Prostate gland (tissue), 2 donors: ENCODE measurements at regions of chr15 and their contacts with region 1.

Region 1: GRCh38 chr15:65184868-65185738 is at the start of gene CLPX:
- DNase-seq: peak; percentile 87
- H3K4me3 ChIP-seq: peak within 1 kb of the TSS; percentile 89 to 92
- H3K27ac ChIP-seq: peak within 1 kb of the TSS; percentile 94 to 97
- H3K4me1 ChIP-seq: no peaks in the 10 kb centered on the region
- H3K27me3 ChIP-seq: no peaks in the 10 kb centered on the region
- CTCF ChIP-seq: no peak
- POLR2A ChIP-seq: peak; percentile 66
- total RNA-seq, gene CLPX: 36.2 to 41.2 TPM

Region 2: DNA sequence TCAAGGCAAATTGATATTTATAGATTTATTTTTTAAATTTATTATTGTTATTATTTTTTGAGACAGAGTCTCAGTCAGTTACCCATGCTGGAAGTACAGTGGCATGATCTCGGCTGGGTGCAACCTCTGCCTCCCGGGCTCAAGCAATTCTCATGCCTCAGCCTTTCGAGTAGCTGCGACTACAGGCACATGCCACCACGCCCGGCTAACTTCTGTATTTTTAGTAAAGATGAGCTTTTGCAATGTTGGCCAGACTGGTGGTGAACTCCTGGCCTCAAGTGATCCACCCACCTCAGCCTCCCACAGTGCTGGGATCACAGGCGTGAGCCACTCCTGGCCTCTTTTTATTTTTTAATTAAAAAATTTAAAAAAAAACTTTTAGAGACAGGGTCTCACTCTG is 214.4 kb before region 1 on chr15:
- intact Hi-C with region 1: no loop called
- DNase-seq: no peak
- H3K4me3 ChIP-seq: no peak overlapping the region
- H3K27ac ChIP-seq: no peak overlapping the region
- H3K4me1 ChIP-seq: no peaks in the 10 kb centered on the region
- H3K27me3 ChIP-seq: no peaks in the 10 kb centered on the region
- CTCF ChIP-seq: no peak
- POLR2A ChIP-seq: no peak

Region 3: GRCh38 chr15:65032801-65033537 is 152.1 kb before region 1 on chr15:
- intact Hi-C with region 1: loop called (anchors 5 kb)
- DNase-seq: peak; percentile 42
- H3K4me3 ChIP-seq: no peak overlapping the region
- H3K27ac ChIP-seq: no peak overlapping the region
- H3K4me1 ChIP-seq: peaks cover 4% of the 10 kb centered on the region
- H3K27me3 ChIP-seq: no peaks in the 10 kb centered on the region
- CTCF ChIP-seq: peak; percentile 16 to 73 (median 50)
- POLR2A ChIP-seq: no peak

Region 4: GRCh38 chr15:65086017-65086679 is 99.0 kb before region 1 on chr15:
- intact Hi-C with region 1: no loop called
- DNase-seq: no peak
- H3K4me3 ChIP-seq: no peak overlapping the region
- H3K27ac ChIP-seq: peak overlapping the region; percentile 87 to 88
- H3K4me1 ChIP-seq: no peaks in the 10 kb centered on the region
- H3K27me3 ChIP-seq: no peaks in the 10 kb centered on the region
- CTCF ChIP-seq: peak in 3 of 4 experiments; percentile 9 to 38 (median 35)
- POLR2A ChIP-seq: no peak

Region 5: GRCh38 chr15:65212097-65212496 is 27.0 kb after region 1 on chr15:
- intact Hi-C with region 1: no loop called
- DNase-seq: no peak
- H3K4me3 ChIP-seq: no peak overlapping the region
- H3K27ac ChIP-seq: no peak overlapping the region
- H3K4me1 ChIP-seq: no peaks in the 10 kb centered on the region
- H3K27me3 ChIP-seq: no peaks in the 10 kb centered on the region
- CTCF ChIP-seq: no peak
- POLR2A ChIP-seq: no peak

Region 6: DNA sequence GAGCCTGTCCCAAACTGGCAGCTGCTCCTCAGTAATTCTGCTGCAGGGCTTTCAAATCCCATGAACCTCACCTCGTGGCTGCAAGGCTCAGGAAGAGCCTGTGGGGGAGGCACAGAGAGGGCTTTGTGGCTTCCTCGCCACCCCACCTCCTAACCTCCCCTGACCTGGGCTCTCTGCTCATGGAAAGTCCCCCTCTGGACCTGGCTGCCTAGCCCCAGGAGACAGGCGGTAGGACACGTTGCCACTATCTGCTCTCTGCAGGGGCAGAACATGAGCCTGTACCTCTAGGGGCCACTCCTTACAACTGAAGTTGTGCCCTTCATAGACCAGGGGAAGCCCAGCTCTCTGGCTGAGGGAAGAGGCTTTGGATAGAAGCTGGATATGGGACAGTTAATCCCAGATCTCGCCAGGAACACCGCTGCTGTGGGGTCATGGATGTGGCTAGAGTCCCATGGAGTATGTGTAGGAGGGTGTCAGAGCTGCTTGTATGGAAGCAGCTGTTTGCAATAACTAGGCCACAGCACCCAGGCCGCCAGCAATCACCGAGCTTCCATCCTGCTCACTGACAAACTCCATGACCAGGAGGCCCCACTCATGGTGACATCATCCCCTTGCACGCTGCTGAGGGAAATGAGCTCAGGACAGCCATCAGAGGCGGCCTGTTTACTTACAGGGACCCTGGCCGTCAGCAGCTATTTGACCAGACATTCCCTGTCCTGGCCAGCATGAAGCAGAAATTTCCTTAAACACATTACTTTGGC is 60.2 kb after region 1 on chr15:
- intact Hi-C with region 1: no loop called
- DNase-seq: no peak
- H3K4me3 ChIP-seq: no peak overlapping the region
- H3K27ac ChIP-seq: no peak overlapping the region
- H3K4me1 ChIP-seq: no peaks in the 10 kb centered on the region
- H3K27me3 ChIP-seq: no peaks in the 10 kb centered on the region
- CTCF ChIP-seq: no peak
- POLR2A ChIP-seq: no peak

Region 7: DNA sequence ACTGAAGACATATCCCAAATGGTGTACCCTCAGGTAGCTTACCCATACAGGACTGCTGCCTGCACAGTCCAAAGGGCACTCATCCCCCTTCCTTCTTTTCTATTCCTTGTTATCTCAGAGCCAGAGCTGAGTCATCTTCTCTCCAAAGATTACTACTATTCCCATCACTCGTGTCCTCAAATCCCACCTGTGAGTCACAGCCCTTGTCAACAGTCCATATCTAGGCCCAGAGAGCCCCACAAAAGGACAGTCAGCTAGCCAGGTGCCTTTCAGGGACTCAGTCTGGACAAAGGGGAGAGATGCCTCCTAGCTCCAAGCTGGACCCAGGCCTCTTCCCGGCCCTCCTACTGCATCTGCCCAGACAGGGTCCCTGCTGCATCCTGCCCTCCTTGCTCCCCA is 90.6 kb after region 1 on chr15:
- intact Hi-C with region 1: loop called (anchors 2 kb)
- DNase-seq: no peak
- H3K4me3 ChIP-seq: no peak overlapping the region
- H3K27ac ChIP-seq: no peak overlapping the region
- H3K4me1 ChIP-seq: no peaks in the 10 kb centered on the region
- H3K27me3 ChIP-seq: no peaks in the 10 kb centered on the region
- CTCF ChIP-seq: no peak
- POLR2A ChIP-seq: no peak

Region 8: GRCh38 chr15:65298731-65299130 is 113.6 kb after region 1 on chr15:
- intact Hi-C with region 1: loop called (anchors 5 kb)
- DNase-seq: no peak
- H3K4me3 ChIP-seq: no peak overlapping the region
- H3K27ac ChIP-seq: no peak overlapping the region
- H3K4me1 ChIP-seq: no peaks in the 10 kb centered on the region
- H3K27me3 ChIP-seq: no peaks in the 10 kb centered on the region
- CTCF ChIP-seq: no peak
- POLR2A ChIP-seq: no peak